H1 (cell line): ENCODE measurements at regions of chr1 and their contacts with region 1.

Region 1: GRCh38 chr1:23772049-23772853 is 6.0 kb upstream of the PITHD1 start:
- DNase-seq: peak in 1 of 2 experiments; percentile 97
- H3K4me3 ChIP-seq: no peak overlapping the region
- H3K27ac ChIP-seq: no peak overlapping the region
- H3K4me1 ChIP-seq: no peaks in the 10 kb centered on the region
- H3K27me3 ChIP-seq: no peaks in the 10 kb centered on the region
- CTCF ChIP-seq: peak; percentile 89 to 99 (median 98)
- EP300 ChIP-seq: no peak
- POLR2A ChIP-seq: no peak
- RAD21 ChIP-seq: peak; percentile 78 to 85

Region 2: GRCh38 chr1:23751050-23751814 is 21.0 kb before region 1 on chr1:
- CTCF ChIA-PET with region 1: interaction called, 11 read pairs
- POLR2A ChIA-PET with region 1: interaction called, 3 read pairs
- DNase-seq: peak; percentile 9 to 58
- H3K4me3 ChIP-seq: no peak overlapping the region
- H3K27ac ChIP-seq: no peak overlapping the region
- H3K4me1 ChIP-seq: no peaks in the 10 kb centered on the region
- H3K27me3 ChIP-seq: no peaks in the 10 kb centered on the region
- CTCF ChIP-seq: peak; percentile 71 to 85 (median 71)
- EP300 ChIP-seq: no peak
- POLR2A ChIP-seq: no peak
- RAD21 ChIP-seq: peak; percentile 72 to 79

Region 3: DNA sequence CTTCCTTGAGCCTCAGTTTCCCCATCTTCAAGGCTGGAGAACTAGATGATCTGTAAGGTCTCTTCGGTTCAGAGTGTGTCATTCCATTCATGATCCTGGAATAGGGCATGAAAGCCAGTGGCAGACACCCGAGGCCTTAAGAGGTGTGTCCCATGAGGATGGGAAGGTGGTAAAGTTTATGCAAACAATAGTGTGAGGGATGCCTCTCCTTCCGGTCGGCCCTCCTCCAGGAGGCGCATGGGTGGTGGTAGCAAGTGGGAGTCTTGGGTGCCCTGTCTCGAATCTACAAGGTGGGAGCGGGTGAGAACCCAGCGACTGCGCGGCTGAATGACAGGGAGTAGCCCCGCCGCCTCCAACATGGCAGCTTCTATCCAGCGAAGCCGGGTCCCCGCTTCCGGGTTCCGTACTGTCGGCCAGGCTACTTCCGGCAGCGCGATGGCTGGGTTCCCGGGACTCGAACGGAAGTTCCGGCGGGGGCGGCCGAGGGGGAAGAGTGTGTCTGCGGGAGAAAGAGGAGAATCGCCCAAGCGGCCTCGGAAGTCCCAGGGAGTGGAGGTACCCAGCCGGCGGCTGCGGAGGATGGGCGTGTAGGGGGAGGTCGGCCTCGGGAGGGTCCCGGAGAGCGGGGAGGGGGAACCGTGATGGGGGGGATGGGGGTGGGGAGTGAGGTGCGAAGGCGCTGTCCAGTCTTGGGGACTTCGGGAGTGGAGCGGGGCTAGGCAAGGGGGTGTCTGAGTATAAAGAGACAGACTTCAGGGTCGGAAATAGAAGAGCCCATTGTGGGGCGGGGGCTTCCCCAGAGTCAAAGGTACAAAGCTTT is 18.7 kb after region 1 on chr1 and contains the start of gene LYPLA2:
- CTCF ChIA-PET with region 1: interaction called, 37 read pairs
- POLR2A ChIA-PET with region 1: interaction called, 192 read pairs
- DNase-seq: peak in 1 of 2 experiments; percentile 92
- H3K4me3 ChIP-seq: peak within 1 kb of the TSS; percentile 63 to 100 (median 96)
- H3K27ac ChIP-seq: no peak within 1 kb of the TSS
- H3K4me1 ChIP-seq: peaks cover 0 to 11% (median 6%) of the 10 kb centered on the region in 4 experiments; a peak in 5 of 7 replicates
- H3K27me3 ChIP-seq: no peaks in the 10 kb centered on the region
- CTCF ChIP-seq: 0 out of 4 replicates have a peak, but pooled peaks of 1 of the 3 experiments have one; percentile 26
- EP300 ChIP-seq: no peak
- POLR2A ChIP-seq: no peak
- RAD21 ChIP-seq: no peak
- total RNA-seq, gene LYPLA2: 138 and 152 TPM in 2 replicates

Region 4: GRCh38 chr1:23838401-23838866 is 66.2 kb after region 1 on chr1:
- CTCF ChIA-PET with region 1: no interaction called
- POLR2A ChIA-PET with region 1: no interaction called
- DNase-seq: peak in 1 of 2 experiments; percentile 78
- H3K4me3 ChIP-seq: peak overlapping the region; percentile 21 to 56 (median 35); a peak in 6 of 8 replicates
- H3K27ac ChIP-seq: no peak overlapping the region
- H3K4me1 ChIP-seq: peaks cover 0 to 4% (median 2%) of the 10 kb centered on the region in 4 experiments; a peak in 4 of 7 replicates
- H3K27me3 ChIP-seq: peaks cover 0 to 7% (median 6%) of the 10 kb centered on the region in 4 experiments; a peak in 5 of 7 replicates
- CTCF ChIP-seq: no peak
- EP300 ChIP-seq: no peak
- POLR2A ChIP-seq: no peak
- RAD21 ChIP-seq: no peak

Region 5: DNA sequence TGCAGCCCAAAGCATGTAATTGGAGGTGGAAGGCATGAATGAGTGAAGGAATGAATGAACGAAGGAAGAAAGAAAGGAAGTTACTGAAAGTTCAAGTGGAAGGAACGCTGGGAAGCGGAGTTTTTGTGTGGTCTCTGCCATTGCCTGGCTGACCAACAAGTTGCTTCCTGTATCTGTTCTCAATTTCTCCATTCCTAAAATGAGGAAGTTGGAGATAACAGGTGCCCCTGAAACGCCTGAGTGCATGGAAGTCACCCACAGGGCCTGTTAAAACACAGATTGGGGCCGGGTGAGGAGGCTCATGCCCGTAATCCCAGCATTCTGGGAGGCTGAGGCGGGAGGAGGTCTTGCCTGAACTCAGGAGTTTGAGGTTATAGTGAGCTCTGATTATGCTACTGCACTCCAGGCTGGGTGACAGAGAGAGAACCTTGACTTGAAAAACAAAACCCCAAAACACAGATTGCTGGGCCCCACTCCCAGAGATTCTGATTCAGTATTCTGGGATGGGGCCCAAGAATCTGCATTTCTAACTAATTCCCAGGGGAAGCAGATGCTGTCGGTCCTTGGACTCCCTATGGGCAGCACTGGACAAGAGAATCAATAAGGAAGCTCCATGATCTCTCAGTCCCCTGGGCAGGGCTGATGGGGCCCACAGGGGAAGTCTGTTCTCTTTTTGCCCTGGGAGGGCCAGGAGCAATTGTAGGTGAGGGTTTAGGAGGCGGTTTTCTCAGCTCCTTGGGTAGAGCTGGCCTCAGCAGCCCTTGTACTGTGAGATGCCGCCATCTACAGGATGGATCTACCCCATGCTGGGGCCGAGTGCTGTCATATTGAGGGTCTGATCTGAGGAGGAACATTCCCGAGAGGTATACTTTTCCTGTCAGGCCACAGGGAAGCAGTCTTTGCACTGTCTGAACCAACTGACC is 144.2 kb after region 1 on chr1:
- CTCF ChIA-PET with region 1: interaction called, 21 read pairs
- POLR2A ChIA-PET with region 1: no interaction called
- DNase-seq: peak; percentile 59 to 83
- H3K4me3 ChIP-seq: no peak overlapping the region
- H3K27ac ChIP-seq: no peak overlapping the region
- H3K4me1 ChIP-seq: peaks cover 0 to 2% (median 0%) of the 10 kb centered on the region in 4 experiments; a peak in 2 of 7 replicates
- H3K27me3 ChIP-seq: no peaks in the 10 kb centered on the region
- CTCF ChIP-seq: peak; percentile 67 to 74 (median 73)
- EP300 ChIP-seq: no peak
- POLR2A ChIP-seq: no peak
- RAD21 ChIP-seq: peak; percentile 84 to 88